B cell (primary cell): ENCODE measurements at regions of chr10 and their contacts with region 1.

Region 1: GRCh38 chr10:100009793-100010676 is at the start of gene DNMBP:
- DNase-seq: peak; percentile 92
- ATAC-seq: peak; percentile 87
- H3K4me3 ChIP-seq: peak within 1 kb of the TSS; percentile 82 to 95 (median 90)
- H3K4me3 Mint-ChIP-seq: peak within 1 kb of the TSS; percentile 95
- H3K27ac ChIP-seq: peak within 1 kb of the TSS; percentile 55 to 78
- H3K27ac Mint-ChIP-seq: peak within 1 kb of the TSS; percentile 94
- H3K4me1 ChIP-seq: peaks cover 49 to 54% of the 10 kb centered on the region in 2 donors
- H3K4me1 Mint-ChIP-seq: peaks cover 72% of the 10 kb centered on the region
- H3K27me3 ChIP-seq: no peaks in the 10 kb centered on the region
- H3K27me3 Mint-ChIP-seq: no peaks in the 10 kb centered on the region
- CTCF ChIP-seq: peak; percentile 61
- total RNA-seq, gene DNMBP: 22.6 TPM in 2 replicates

Region 2: GRCh38 chr10:99732033-99732912 is 277.8 kb before region 1 on chr10 and contains the starts of genes COX15 and CUTC:
- CTCF ChIA-PET with region 1: no interaction called
- POLR2A ChIA-PET with region 1: no interaction called
- intact Hi-C with region 1: loop called (anchors 1 kb)
- DNase-seq: peak; percentile 95
- ATAC-seq: peak; percentile 93
- H3K4me3 ChIP-seq: peak within 1 kb of the TSS; percentile 84 to 99 (median 93)
- H3K4me3 Mint-ChIP-seq: peak within 1 kb of the TSS; percentile 95
- H3K27ac ChIP-seq: peak within 1 kb of the TSS; percentile 82 to 83
- H3K27ac Mint-ChIP-seq: peak within 1 kb of the TSS; percentile 99
- H3K4me1 ChIP-seq: peaks cover 13 to 24% of the 10 kb centered on the region in 2 donors
- H3K4me1 Mint-ChIP-seq: peaks cover 32% of the 10 kb centered on the region
- H3K27me3 ChIP-seq: no peaks in the 10 kb centered on the region
- H3K27me3 Mint-ChIP-seq: no peaks in the 10 kb centered on the region
- CTCF ChIP-seq: peak; percentile 64
- total RNA-seq, gene COX15: 39.5 and 47.4 TPM in 2 replicates
- total RNA-seq, gene CUTC: 32.0 and 33.3 TPM in 2 replicates

Region 3: GRCh38 chr10:99958302-99958701 is 51.7 kb before region 1 on chr10:
- CTCF ChIA-PET with region 1: interaction called, 11 read pairs
- POLR2A ChIA-PET with region 1: no interaction called
- intact Hi-C with region 1: no loop called
- DNase-seq: no peak
- ATAC-seq: no peak
- H3K4me3 ChIP-seq: no peak overlapping the region
- H3K4me3 Mint-ChIP-seq: no peak overlapping the region
- H3K27ac ChIP-seq: no peak overlapping the region
- H3K27ac Mint-ChIP-seq: no peak overlapping the region
- H3K4me1 ChIP-seq: no peaks in the 10 kb centered on the region
- H3K4me1 Mint-ChIP-seq: peaks cover 3% of the 10 kb centered on the region
- H3K27me3 ChIP-seq: no peaks in the 10 kb centered on the region
- H3K27me3 Mint-ChIP-seq: no peaks in the 10 kb centered on the region
- CTCF ChIP-seq: no peak

Region 4: GRCh38 chr10:99983280-99983988 is 26.6 kb before region 1 on chr10:
- CTCF ChIA-PET with region 1: interaction called, 15 read pairs
- POLR2A ChIA-PET with region 1: interaction called, 4 read pairs
- intact Hi-C with region 1: no loop called
- DNase-seq: no peak
- ATAC-seq: peak; percentile 31
- H3K4me3 ChIP-seq: peak overlapping the region in 1 of 5 experiments; percentile 47
- H3K4me3 Mint-ChIP-seq: peak overlapping the region; percentile 70
- H3K27ac ChIP-seq: peak overlapping the region; percentile 53 to 68
- H3K27ac Mint-ChIP-seq: peak overlapping the region; percentile 84
- H3K4me1 ChIP-seq: peaks cover 45 to 55% of the 10 kb centered on the region in 2 donors
- H3K4me1 Mint-ChIP-seq: peaks cover 53% of the 10 kb centered on the region
- H3K27me3 ChIP-seq: no peaks in the 10 kb centered on the region
- H3K27me3 Mint-ChIP-seq: no peaks in the 10 kb centered on the region
- CTCF ChIP-seq: no peak

Region 5: GRCh38 chr10:99999319-100000108 is 10.5 kb before region 1 on chr10:
- CTCF ChIA-PET with region 1: interaction called, 75 read pairs
- POLR2A ChIA-PET with region 1: no interaction called
- intact Hi-C with region 1: loop called (anchors 1 kb)
- DNase-seq: no peak
- ATAC-seq: no peak
- H3K4me3 ChIP-seq: no peak overlapping the region
- H3K4me3 Mint-ChIP-seq: no peak overlapping the region
- H3K27ac ChIP-seq: no peak overlapping the region
- H3K27ac Mint-ChIP-seq: no peak overlapping the region
- H3K4me1 ChIP-seq: peaks cover 11 to 16% of the 10 kb centered on the region in 2 donors
- H3K4me1 Mint-ChIP-seq: peaks cover 44% of the 10 kb centered on the region
- H3K27me3 ChIP-seq: no peaks in the 10 kb centered on the region
- H3K27me3 Mint-ChIP-seq: no peaks in the 10 kb centered on the region
- CTCF ChIP-seq: no peak

Region 6: GRCh38 chr10:100046021-100046486 is 36.0 kb after region 1 on chr10:
- CTCF ChIA-PET with region 1: interaction called, 69 read pairs
- POLR2A ChIA-PET with region 1: interaction called, 7 read pairs
- intact Hi-C with region 1: loop called (anchors 5 kb)
- DNase-seq: peak; percentile 83
- ATAC-seq: peak; percentile 70
- H3K4me3 ChIP-seq: no peak overlapping the region
- H3K4me3 Mint-ChIP-seq: no peak overlapping the region
- H3K27ac ChIP-seq: no peak overlapping the region
- H3K27ac Mint-ChIP-seq: no peak overlapping the region
- H3K4me1 ChIP-seq: peaks cover 0 to 4% of the 10 kb centered on the region in 2 donors
- H3K4me1 Mint-ChIP-seq: peaks cover 4% of the 10 kb centered on the region
- H3K27me3 ChIP-seq: no peaks in the 10 kb centered on the region
- H3K27me3 Mint-ChIP-seq: no peaks in the 10 kb centered on the region
- CTCF ChIP-seq: peak; percentile 97

Region 7: DNA sequence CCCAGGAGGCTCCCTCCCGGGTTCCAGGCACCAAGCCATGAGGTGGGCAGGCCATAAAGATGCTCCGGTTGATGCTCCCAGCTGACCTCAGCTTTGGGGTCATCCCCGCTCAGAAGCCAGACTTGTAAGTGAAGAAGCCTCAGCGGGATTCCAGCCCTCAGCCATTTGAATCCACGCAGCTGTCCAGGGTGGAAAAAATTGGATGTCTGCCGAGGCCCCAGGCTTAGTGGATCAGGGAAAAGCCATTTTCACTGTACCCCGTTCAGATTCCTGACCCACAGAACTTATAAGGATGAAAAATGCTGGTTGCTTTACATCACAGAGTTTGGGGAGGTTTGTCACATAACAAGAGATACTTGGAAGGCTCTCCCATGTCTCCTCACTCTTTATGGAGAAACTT is 120.8 kb after region 1 on chr10:
- CTCF ChIA-PET with region 1: no interaction called
- POLR2A ChIA-PET with region 1: no interaction called
- intact Hi-C with region 1: no loop called
- DNase-seq: no peak
- ATAC-seq: no peak
- H3K4me3 ChIP-seq: no peak overlapping the region
- H3K4me3 Mint-ChIP-seq: no peak overlapping the region
- H3K27ac ChIP-seq: no peak overlapping the region
- H3K27ac Mint-ChIP-seq: no peak overlapping the region
- H3K4me1 ChIP-seq: no peaks in the 10 kb centered on the region
- H3K4me1 Mint-ChIP-seq: no peaks in the 10 kb centered on the region
- H3K27me3 ChIP-seq: peaks cover 0 to 4% (median 0%) of the 10 kb centered on the region in 4 experiments
- H3K27me3 Mint-ChIP-seq: peaks cover 26% of the 10 kb centered on the region
- CTCF ChIP-seq: no peak